RWPE1 (cell line): ENCODE measurements at regions of chr1 and their contacts with region 1.

Region 1: DNA sequence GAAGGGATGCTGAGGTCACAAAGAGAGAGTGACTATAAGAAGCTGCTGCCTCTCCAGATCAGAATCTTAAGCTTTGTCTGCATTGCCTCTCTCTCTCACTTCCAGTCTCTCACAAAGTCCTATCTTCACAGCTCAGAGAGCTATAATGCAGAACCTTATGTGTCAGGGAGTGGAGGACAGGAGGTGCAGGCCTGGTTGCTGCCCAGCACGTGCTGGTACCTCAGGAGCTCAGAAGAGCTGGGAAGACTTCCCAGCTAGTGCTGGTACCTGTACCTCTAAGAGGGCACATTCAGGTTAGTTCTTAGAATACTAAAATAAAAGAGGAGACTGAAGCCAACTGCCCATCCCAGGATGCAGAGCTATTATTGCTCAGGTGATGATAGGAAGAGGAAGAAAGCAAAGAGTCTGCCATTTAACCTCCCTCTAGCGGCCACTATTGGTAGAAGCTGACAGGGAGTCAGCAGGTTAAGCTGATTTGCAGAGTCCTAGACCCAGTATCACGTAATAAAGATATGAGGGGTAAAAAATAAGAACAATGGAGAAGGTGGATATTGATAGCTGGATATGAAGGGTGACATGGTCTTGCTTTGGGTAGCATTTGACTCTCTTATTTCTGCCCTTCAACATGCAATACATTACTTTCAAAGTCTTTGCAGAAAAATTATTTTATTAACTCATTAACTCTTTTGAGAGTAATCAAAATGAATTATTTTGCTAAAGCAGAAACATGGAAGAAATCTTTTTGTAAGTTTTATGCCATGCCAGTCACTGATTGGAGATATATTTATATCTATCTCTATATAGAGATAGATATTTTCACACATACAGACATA is 138.1 kb upstream of the HMCN1 start:
- DNase-seq: peak; percentile 64
- H3K27ac ChIP-seq: no peak overlapping the region
- CTCF ChIP-seq: peak; percentile 74

Region 2: DNA sequence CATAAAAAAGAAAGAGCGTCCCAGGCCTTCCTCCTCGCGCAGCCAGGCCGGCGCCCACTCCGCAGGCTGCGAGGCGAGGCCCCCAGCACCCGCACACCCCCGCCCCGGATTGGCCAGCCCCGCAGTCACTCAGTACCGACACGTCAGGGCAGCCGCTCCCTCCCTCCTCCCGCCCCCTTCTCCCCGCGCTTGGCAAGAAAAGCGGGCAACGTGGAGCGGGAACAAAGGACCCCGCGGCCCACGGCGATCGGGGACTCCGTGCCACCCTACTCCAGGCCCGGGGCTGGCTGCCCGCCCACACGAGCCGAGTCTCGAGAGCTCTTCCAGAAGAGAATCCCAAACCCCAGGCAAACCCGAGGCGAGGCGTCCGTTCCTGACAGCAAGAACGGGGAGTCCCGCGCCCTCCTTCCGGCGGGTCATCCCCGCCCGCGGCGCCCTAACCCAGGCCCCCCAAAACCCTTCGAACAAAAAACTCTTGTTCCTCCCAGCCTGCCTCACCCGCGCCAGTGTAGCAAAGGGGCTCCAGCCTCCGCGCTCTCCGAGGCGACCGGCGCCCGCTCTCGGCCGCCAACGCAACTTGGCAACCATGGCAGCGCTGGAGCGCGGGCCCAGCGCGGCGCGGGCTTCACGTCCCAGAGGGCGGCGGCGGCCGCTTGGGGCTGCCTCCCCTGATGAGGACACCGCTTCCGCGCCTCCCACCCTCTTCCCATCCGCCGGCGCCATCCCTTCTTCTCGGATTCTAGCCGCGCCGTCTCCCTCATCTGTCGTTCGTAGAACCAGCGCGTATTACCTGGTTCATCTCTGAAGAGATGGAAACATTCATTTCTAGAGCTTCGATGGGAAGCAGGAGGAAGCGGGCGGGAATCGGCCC is 279.7 kb before region 1 on chr1:
- CTCF ChIA-PET with region 1: interaction called, 12 read pairs
- POLR2A ChIA-PET with region 1: no interaction called
- DNase-seq: peak; percentile 90
- H3K27ac ChIP-seq: peak overlapping the region; percentile 95
- CTCF ChIP-seq: no peak